Activated CD8-positive, alpha-beta T cell treated with anti-CD3 and anti-CD28 coated beads for 36 hours (primary cell): ENCODE measurements at regions of chr4 and their contacts with region 1.

Region 1: DNA sequence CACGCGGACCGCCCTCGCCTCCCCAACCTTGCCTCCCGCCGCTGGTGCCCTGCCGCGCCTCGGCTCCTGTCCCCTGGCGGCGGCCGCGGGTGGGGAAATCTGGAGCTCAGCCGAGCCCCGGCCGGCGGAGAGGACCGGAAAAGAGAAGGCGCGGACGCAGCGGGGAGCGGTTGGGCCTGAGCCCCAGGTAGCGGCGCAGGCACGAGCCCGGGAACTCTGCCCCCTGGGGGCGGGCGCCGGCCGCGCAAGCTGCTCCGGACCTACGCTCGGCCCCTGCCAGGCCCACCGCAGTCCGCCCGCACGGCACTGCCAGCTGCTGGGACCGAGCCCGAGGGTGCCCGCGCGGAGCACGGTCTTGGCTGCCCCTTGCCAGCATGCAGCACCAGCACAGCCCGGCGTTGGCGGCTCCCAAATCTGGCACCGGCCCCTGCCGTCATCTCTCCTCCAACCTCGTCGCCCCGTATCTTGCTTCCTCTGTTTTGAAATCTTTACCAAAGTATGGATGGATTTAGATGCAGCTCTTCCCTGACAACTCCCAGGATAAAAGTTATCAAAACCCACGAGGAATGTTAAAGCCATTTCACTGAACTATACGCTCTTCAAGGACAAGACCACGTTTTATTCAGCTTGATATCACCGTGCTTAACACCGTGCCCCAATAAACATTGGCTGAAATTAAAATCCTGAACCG is at the start of gene PRSS12:
- DNase-seq: peak; percentile 72
- ATAC-seq: peak; percentile 97
- H3K4me3 Mint-ChIP-seq: peak within 1 kb of the TSS; percentile 43
- H3K27ac Mint-ChIP-seq: no peak within 1 kb of the TSS
- H3K4me1 Mint-ChIP-seq: peaks cover 12% of the 10 kb centered on the region
- H3K27me3 Mint-ChIP-seq: peaks cover 64% of the 10 kb centered on the region
- CTCF ChIP-seq: peak; percentile 80
- total RNA-seq, gene PRSS12: not detected

Region 2: DNA sequence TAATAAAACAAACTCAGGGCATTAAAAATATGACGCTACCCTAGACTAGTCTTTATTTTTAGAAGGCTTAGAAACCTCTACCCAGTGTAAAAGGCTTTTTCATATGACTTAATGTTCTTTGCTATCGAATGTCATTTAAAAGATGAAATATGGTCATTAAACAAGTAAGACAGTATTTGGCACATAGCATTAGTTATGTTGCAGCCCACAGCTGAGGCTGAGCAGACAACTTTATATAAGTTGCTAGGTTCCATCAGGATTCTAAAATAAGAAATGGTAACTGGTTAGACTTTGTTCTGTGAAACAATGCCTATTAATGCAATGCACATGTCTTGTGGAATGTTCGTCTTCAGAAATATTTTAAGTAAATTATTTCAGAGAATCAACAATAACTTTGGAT is 10.2 kb after region 1 on chr4:
- CTCF ChIA-PET with region 1: interaction called, 24 read pairs
- POLR2A ChIA-PET with region 1: no interaction called
- intact Hi-C with region 1: no loop called
- DNase-seq: no peak
- ATAC-seq: no peak
- H3K4me3 Mint-ChIP-seq: no peak overlapping the region
- H3K27ac Mint-ChIP-seq: no peak overlapping the region
- H3K4me1 Mint-ChIP-seq: no peaks in the 10 kb centered on the region
- H3K27me3 Mint-ChIP-seq: peaks cover 21% of the 10 kb centered on the region
- CTCF ChIP-seq: no peak

Region 3: GRCh38 chr4:118772081-118772766 is 419.2 kb after region 1 on chr4:
- CTCF ChIA-PET with region 1: no interaction called
- POLR2A ChIA-PET with region 1: no interaction called
- intact Hi-C with region 1: no loop called
- DNase-seq: no peak
- ATAC-seq: peak; percentile 75
- H3K4me3 Mint-ChIP-seq: no peak overlapping the region
- H3K27ac Mint-ChIP-seq: no peak overlapping the region
- H3K4me1 Mint-ChIP-seq: no peaks in the 10 kb centered on the region
- H3K27me3 Mint-ChIP-seq: no peaks in the 10 kb centered on the region
- CTCF ChIP-seq: peak; percentile 63